Calu3 (cell line): ENCODE measurements at regions of chr22 and their contacts with region 1.

Region 1: DNA sequence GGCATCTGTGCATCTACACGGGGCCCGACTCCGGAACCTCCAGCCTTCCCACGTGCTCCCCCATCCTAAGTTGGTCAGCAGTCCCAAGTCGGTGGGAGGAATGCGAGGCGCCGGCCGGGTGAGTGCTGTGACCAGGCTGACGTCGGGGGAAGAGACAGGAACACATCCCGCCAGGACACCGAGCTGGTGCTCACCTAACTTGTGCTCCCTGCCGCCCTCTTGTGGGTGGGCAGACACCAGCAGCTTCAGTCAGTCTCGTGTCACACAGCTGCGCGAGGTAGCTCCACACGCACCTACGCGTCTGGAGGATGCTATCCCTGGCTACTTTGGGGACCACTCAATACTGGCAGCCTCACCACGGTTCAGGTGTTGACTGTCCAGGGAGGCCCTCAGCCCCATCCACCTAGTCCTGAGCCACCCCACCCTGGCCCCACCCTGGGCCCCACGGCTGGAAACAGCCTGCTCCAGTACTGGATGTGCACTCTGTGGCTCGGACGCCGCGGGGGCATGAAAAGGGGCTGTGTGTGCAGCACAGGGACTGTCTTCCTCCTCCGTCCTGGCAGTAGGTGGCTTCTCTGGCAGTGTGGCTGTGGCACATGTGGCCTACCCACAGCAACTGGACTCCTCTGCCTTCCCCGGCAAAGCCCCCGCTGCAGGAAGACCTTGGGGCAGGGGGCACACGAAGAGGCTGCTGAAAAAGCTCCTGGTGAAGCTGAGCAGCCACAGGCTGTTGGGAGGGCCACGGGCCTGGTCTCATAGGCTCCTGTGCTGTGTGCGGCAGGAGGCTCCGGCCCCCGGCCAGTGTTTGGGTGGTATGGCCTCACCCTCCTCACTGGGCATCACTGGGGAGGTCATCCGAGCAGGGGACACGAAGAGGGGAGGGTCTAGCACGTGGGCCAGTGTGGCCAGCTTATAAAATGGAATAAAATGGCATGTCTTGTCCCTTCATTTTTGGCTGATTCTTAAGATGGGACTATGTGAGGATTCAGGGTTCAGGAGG is 11.2 kb upstream of the BID start:
- DNase-seq: peak; percentile 92
- H3K4me3 Mint-ChIP-seq: no peak overlapping the region
- H3K27ac Mint-ChIP-seq: no peak overlapping the region
- H3K4me1 Mint-ChIP-seq: peaks cover 25% of the 10 kb centered on the region
- H3K27me3 Mint-ChIP-seq: no peaks in the 10 kb centered on the region
- CTCF ChIP-seq: peak; percentile 81

Region 2: GRCh38 chr22:17562906-17563870 is 222.3 kb before region 1 on chr22 and contains the start of gene SLC25A18:
- CTCF ChIA-PET with region 1: interaction called, 27 read pairs
- intact Hi-C with region 1: loop called (anchors 1 kb)
- DNase-seq: no peak
- H3K4me3 Mint-ChIP-seq: no peak within 1 kb of the TSS
- H3K27ac Mint-ChIP-seq: no peak within 1 kb of the TSS
- H3K4me1 Mint-ChIP-seq: peaks cover 14% of the 10 kb centered on the region
- H3K27me3 Mint-ChIP-seq: peaks cover 42% of the 10 kb centered on the region
- CTCF ChIP-seq: peak; percentile 36
- total RNA-seq, gene SLC25A18: 0.28 and 0.95 TPM in 2 replicates

Region 3: GRCh38 chr22:17742527-17742902 is 43.0 kb before region 1 on chr22:
- CTCF ChIA-PET with region 1: interaction called, 68 read pairs
- intact Hi-C with region 1: loop called (anchors 2 kb)
- DNase-seq: peak; percentile 84
- H3K4me3 Mint-ChIP-seq: no peak overlapping the region
- H3K27ac Mint-ChIP-seq: no peak overlapping the region
- H3K4me1 Mint-ChIP-seq: peaks cover 6% of the 10 kb centered on the region
- H3K27me3 Mint-ChIP-seq: no peaks in the 10 kb centered on the region
- CTCF ChIP-seq: peak; percentile 90

Region 4: DNA sequence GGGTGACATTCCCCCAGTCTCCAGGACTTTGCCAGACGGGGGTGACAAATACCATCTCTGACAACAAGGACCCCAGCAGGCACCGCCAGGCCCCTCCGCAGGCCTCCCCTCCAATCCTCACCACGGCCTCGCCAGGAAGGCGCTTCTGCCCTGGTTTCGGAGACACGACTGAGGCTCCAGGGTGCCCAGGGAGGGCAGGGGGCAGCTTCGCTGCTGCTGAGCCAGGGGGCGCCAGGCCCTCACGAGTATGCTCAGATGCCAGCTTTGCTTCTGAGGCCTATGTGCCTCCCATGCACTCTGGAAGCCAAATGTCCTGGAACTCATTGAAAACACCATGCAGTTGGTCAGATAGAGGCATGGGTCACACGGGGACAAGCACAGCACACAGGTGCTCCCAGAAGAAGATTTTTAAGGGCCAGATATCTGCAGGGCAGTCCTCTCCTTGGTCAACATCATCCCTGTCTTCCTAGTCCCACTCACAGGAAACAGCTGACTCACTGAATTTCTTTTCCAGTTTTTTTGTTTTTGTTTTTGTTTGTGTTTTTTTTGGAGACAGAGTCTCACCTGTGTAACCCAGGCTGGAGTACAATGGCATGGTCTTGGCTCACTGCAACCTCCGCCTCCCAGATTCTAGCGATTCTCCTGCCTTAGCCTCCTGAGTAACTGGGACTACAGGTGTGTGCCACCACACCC is 31.1 kb before region 1 on chr22:
- CTCF ChIA-PET with region 1: interaction called, 16 read pairs
- intact Hi-C with region 1: no loop called
- DNase-seq: peak; percentile 25
- H3K4me3 Mint-ChIP-seq: no peak overlapping the region
- H3K27ac Mint-ChIP-seq: no peak overlapping the region
- H3K4me1 Mint-ChIP-seq: peaks cover 6% of the 10 kb centered on the region
- H3K27me3 Mint-ChIP-seq: no peaks in the 10 kb centered on the region
- CTCF ChIP-seq: peak; percentile 36

Region 5: GRCh38 chr22:17773606-17774205 is 11.8 kb before region 1 on chr22:
- CTCF ChIA-PET with region 1: interaction called, 23 read pairs
- intact Hi-C with region 1: no loop called
- DNase-seq: peak; percentile 51
- H3K4me3 Mint-ChIP-seq: peak overlapping the region; percentile 91
- H3K27ac Mint-ChIP-seq: peak overlapping the region; percentile 68
- H3K4me1 Mint-ChIP-seq: peaks cover 31% of the 10 kb centered on the region
- H3K27me3 Mint-ChIP-seq: no peaks in the 10 kb centered on the region
- CTCF ChIP-seq: no peak

Region 6: GRCh38 chr22:18022876-18023275 is 237.4 kb after region 1 on chr22:
- CTCF ChIA-PET with region 1: no interaction called
- intact Hi-C with region 1: no loop called
- DNase-seq: no peak
- H3K4me3 Mint-ChIP-seq: peak overlapping the region; percentile 96
- H3K27ac Mint-ChIP-seq: no peak overlapping the region
- H3K4me1 Mint-ChIP-seq: peaks cover 26% of the 10 kb centered on the region
- H3K27me3 Mint-ChIP-seq: no peaks in the 10 kb centered on the region
- CTCF ChIP-seq: no peak